Endothelial cell of umbilical vein (primary cell): ENCODE measurements at regions of chr20 and their contacts with region 1.

Region 1: DNA sequence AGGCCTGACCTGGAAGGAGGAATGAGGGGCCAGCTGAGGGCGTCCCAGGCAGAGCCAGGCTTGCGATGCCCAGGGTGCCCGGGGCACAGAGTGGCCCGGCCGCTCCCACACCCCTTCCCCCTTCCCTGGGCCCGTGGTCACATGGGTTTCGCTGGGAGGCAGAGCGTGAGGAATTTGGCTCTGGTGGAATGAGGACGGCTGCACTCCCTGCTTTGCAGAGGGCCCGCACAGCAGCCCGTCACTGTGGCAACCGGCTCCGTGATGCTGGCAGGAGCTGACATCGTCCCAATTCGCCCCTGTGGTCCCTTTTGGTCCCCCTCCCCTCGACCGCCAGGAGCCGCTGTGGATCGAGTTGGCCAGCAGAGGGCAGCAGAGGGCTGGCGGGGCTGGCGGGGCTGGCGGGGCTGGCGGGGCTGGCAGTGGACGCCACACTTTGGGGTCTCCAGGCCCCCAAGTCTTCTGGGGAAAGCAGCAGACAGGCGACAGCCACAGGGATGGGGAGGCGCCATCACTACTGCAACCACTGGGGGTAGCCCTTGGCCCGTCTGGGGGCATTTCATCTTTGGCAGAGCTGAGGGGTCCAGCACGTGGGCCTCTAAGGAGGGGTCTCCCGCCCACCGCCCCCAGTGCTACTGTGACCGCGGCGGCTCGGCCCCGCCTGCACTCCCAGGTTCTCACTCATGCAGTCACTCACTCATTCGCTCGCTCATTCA is 49.6 kb upstream of the BHLHE23 start:
- DNase-seq: peak; percentile 7
- H3K4me3 ChIP-seq: no peak overlapping the region
- H3K27ac ChIP-seq: no peak overlapping the region
- H3K4me1 ChIP-seq: no peaks in the 10 kb centered on the region
- H3K27me3 ChIP-seq: peaks cover 2 to 4% of the 10 kb centered on the region in 2 experiments
- CTCF ChIP-seq: peak; percentile 66 to 80
- POLR2A ChIP-seq: no peak

Region 2: DNA sequence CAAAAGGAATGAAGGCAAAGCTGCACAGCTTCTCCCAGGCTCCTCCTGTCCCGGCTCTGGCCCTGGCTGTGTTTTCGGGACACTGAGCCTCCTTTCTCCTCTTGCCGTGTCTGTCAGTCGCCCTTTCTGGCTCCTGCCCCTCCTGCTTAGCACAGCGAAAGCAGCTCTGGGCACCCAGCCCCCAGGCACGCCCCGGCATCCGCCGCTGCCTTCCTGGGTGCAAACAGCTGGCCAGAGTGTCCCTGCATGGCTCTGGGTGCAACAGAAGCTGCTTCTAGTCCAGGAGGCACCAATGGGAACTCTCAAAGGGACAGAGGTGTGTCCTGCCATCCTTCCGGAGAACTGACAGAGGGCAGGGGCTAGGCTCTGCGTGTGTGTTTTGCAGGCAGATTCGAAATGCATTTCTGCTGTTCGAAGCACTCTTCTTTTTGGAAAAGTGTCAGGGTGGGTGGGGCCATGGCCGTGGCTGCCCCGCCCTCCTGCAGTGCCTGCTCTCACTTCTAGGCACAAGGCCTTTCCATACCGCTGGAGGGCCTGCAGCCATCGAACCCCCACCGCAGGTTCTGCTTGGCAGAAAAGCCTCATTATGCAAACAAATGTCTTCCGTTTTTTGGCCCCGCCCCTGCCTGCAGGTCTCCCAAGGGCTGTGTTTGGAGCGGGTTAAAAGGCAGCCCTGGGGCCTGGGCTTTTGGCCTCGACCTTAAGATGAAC is 224.0 kb before region 1 on chr20:
- CTCF ChIA-PET with region 1: no interaction called
- POLR2A ChIA-PET with region 1: no interaction called
- dilution Hi-C with region 1: no loop called
- intact Hi-C with region 1: no loop called
- DNase-seq: no peak
- H3K4me3 ChIP-seq: no peak overlapping the region
- H3K27ac ChIP-seq: no peak overlapping the region
- H3K4me1 ChIP-seq: no peaks in the 10 kb centered on the region
- H3K27me3 ChIP-seq: no peaks in the 10 kb centered on the region
- CTCF ChIP-seq: no peak
- POLR2A ChIP-seq: no peak

Region 3: DNA sequence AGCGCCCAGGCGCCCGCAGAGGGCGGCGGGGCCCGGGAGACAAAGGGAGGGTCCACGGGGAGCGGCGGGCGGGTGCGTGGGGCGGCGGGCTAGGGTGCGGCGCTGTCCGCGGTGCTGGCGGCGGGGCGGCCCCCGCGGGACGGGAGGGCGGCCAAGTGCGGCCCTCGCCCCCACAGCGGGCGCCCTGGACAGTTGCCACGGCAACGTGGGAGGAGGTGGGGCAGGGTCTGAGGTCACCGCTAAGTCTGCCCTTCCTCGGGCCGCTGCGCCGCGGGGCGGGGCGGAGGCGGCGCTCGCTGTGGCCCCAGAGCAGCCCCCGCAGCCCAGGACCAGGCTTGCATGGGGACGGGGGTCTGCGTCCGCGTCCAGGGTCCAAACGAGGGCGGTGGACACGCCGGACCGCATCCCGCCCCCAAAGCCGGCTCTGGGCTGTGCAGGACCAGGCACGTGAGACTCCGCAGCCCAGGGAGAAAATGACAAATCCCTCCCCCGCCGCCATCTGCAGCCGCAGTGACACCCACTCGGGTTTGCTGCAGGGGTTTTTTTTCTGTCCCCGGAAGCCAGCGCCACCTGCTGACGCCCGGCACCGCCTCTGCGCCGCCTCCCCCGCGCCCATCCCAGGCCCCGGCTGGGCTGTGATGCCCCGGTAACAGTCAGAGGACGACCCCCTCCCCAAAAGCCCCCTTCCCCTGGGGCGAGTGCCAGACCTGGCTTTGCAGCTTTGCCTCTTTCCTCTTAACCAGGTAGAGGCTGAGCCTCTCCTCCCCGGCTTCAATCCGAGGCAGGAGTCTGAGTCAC is 122.7 kb after region 1 on chr20:
- CTCF ChIA-PET with region 1: interaction called, 3 read pairs
- POLR2A ChIA-PET with region 1: no interaction called
- dilution Hi-C with region 1: no loop called
- intact Hi-C with region 1: loop called (anchors 5 kb)
- DNase-seq: no peak
- H3K4me3 ChIP-seq: no peak overlapping the region
- H3K27ac ChIP-seq: no peak overlapping the region
- H3K4me1 ChIP-seq: no peaks in the 10 kb centered on the region
- H3K27me3 ChIP-seq: peaks cover 40 to 55% of the 10 kb centered on the region in 2 experiments
- CTCF ChIP-seq: peak in 1 of 2 donors; percentile 20
- POLR2A ChIP-seq: no peak

Region 4: GRCh38 chr20:63216041-63216848 is 159.9 kb after region 1 on chr20 and contains the start of gene YTHDF1:
- CTCF ChIA-PET with region 1: interaction called, 7 read pairs
- POLR2A ChIA-PET with region 1: no interaction called
- dilution Hi-C with region 1: no loop called
- intact Hi-C with region 1: loop called (anchors 1 kb)
- DNase-seq: peak; percentile 94
- H3K4me3 ChIP-seq: peak within 1 kb of the TSS; percentile 59 to 94 (median 86)
- H3K27ac ChIP-seq: peak within 1 kb of the TSS; percentile 79
- H3K4me1 ChIP-seq: peaks cover 13% of the 10 kb centered on the region
- H3K27me3 ChIP-seq: no peaks in the 10 kb centered on the region
- CTCF ChIP-seq: no peak
- POLR2A ChIP-seq: peak; percentile 75
- total RNA-seq, gene YTHDF1: 41.1 and 44.4 TPM in 2 replicates

Region 5: DNA sequence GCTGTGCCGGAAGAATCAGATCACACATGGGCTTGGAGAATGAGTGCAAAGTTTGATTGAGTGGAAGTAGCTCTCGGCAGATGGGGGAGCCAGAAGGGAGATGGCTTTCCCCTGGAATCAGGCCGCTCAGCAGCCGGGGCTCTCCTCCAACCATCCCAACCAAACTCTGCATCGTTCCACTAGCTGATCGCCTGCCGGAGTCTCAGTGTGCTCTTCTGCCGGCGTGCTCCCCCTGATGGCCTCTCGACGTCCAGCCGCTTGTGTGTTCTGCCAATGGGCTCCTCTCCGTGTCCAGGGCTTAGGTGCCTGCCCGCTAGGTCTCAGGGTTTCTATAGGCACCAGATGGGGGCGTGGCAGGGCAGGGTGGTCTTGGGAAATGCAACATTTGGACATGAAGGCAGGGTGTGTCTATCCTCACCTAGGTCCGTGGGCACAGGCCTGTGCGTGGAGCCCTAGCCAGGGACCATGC is 174.4 kb after region 1 on chr20:
- CTCF ChIA-PET with region 1: no interaction called
- POLR2A ChIA-PET with region 1: no interaction called
- dilution Hi-C with region 1: no loop called
- intact Hi-C with region 1: loop called (anchors 5 kb)
- DNase-seq: peak; percentile 54
- H3K4me3 ChIP-seq: no peak overlapping the region
- H3K27ac ChIP-seq: no peak overlapping the region
- H3K4me1 ChIP-seq: no peaks in the 10 kb centered on the region
- H3K27me3 ChIP-seq: peaks cover 0 to 10% of the 10 kb centered on the region in 2 experiments
- CTCF ChIP-seq: peak; percentile 25 to 78
- POLR2A ChIP-seq: no peak